Right ventricle myocardium superior (tissue), 1 donor: ENCODE measurements at regions of chr1 and their contacts with region 1.

Region 1: DNA sequence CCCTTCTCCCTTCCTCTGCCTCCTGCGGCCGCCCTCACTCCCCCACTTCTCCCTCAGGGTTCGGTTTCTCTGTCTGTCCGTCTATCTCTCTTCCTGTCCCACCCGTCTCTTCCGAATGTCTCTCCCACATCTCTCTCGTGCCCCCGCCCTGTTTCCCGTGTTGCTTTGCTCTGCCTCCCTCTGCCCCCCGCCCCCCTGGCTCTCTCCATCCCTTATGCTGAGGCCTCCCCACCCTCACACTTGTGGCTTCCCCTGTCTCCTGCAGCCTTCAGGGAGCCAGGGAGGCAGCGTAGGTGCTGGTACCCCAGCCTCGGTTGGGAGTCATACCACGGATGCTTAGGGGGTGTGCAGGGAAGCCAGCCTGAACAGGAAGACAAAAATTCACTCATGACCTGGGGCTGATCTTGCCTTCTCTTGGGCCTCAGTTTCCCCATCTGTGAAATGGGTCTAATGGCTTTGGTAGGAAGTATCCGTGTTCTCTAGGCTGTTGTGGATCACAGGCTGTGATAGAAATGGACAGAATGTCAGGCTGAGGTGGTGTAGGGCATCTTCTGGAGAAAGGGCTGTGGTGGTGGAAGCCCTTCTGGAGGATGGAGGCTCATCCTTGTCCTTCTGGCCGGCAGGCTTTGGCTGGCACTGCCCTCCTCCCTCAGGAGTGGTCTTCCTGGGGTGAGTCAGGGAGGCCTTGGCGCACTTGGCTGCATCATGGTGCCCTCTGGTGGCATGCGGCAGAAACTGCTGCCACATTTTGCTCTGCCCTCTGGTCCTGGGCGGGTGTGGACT is 55.5 kb downstream of the FOXO6 start:
- DNase-seq: peak; percentile 71
- ATAC-seq: peak; percentile 75

Region 2: GRCh38 chr1:40861224-40862003 is 555.3 kb before region 1 on chr1:
- intact Hi-C with region 1: no loop called
- DNase-seq: peak; percentile 63
- ATAC-seq: peak; percentile 22

Region 3: GRCh38 chr1:41268154-41268770 is 148.5 kb before region 1 on chr1:
- intact Hi-C with region 1: loop called (anchors 5 kb)
- DNase-seq: peak; percentile 79
- ATAC-seq: peak; percentile 92

Region 4: DNA sequence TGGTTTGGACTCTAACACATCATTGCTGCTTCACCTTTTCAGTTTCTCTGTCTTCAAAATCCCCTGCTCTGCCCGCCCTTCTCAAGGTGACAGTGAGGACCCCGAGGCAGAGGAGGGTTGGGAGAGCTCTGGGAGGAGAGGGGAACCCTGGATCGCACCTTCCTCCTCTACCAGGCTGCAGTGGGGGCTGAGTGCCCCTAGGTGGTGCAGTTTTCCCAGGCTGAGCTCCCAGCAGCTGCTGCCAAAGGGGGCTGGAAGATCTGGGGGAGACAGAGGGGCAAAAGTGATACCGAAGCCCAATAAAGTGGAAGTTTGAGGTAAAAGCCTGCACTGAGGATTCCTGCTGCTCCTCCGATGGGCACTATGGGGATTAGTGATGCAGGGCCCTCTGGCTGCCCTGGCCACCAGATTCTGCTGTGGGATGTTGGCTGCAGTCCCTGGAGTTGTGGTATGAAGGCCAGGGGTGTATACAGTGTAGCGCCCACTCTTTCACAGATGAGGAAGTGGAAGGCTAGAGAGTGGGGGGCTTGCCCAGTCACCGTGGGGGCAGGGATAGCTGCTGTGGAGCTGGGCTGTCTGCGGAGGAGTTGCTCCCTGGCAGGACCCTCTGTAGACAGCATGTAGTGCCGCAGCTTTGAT is 133.9 kb before region 1 on chr1:
- intact Hi-C with region 1: loop called (anchors 5 kb)
- DNase-seq: peak; percentile 53
- ATAC-seq: peak; percentile 77

Region 5: GRCh38 chr1:41322835-41323627 is 93.7 kb before region 1 on chr1:
- intact Hi-C with region 1: loop called (anchors 5 kb)
- DNase-seq: peak; percentile 71
- ATAC-seq: peak; percentile 76